B cell (primary cell): ENCODE measurements at regions of chr2 and their contacts with region 1.

Region 1: GRCh38 chr2:38750891-38751595 is at the start of gene SRSF7:
- DNase-seq: peak; percentile 99
- ATAC-seq: peak; percentile 77
- H3K4me3 ChIP-seq: peak within 1 kb of the TSS; percentile 78 to 100 (median 98)
- H3K4me3 Mint-ChIP-seq: peak within 1 kb of the TSS; percentile 99
- H3K27ac ChIP-seq: peak within 1 kb of the TSS; percentile 98 to 99
- H3K27ac Mint-ChIP-seq: peak within 1 kb of the TSS; percentile 99
- H3K4me1 ChIP-seq: peaks cover 39 to 46% of the 10 kb centered on the region in 2 donors
- H3K4me1 Mint-ChIP-seq: peaks cover 54% of the 10 kb centered on the region
- H3K27me3 ChIP-seq: no peaks in the 10 kb centered on the region
- H3K27me3 Mint-ChIP-seq: no peaks in the 10 kb centered on the region
- CTCF ChIP-seq: no peak
- total RNA-seq, gene SRSF7: 280 and 283 TPM in 2 replicates

Region 2: GRCh38 chr2:38535744-38536506 is 215.1 kb before region 1 on chr2:
- CTCF ChIA-PET with region 1: interaction called, 5 read pairs
- POLR2A ChIA-PET with region 1: interaction called, 18 read pairs
- intact Hi-C with region 1: no loop called
- DNase-seq: peak; percentile 85
- ATAC-seq: peak; percentile 54
- H3K4me3 ChIP-seq: peak overlapping the region in 4 of 5 experiments; percentile 40 to 79 (median 52)
- H3K4me3 Mint-ChIP-seq: peak overlapping the region; percentile 78
- H3K27ac ChIP-seq: no peak overlapping the region
- H3K27ac Mint-ChIP-seq: peak overlapping the region; percentile 37
- H3K4me1 ChIP-seq: peaks cover 28 to 39% of the 10 kb centered on the region in 2 donors
- H3K4me1 Mint-ChIP-seq: peaks cover 34% of the 10 kb centered on the region
- H3K27me3 ChIP-seq: peaks cover 0 to 7% (median 1%) of the 10 kb centered on the region in 4 experiments
- H3K27me3 Mint-ChIP-seq: peaks cover 23% of the 10 kb centered on the region
- CTCF ChIP-seq: peak; percentile 90

Region 3: GRCh38 chr2:38665854-38666555 is 85.0 kb before region 1 on chr2 and contains the start of gene GALM:
- CTCF ChIA-PET with region 1: no interaction called
- POLR2A ChIA-PET with region 1: interaction called, 8 read pairs
- intact Hi-C with region 1: loop called (anchors 5 kb)
- DNase-seq: peak; percentile 50
- ATAC-seq: peak; percentile 70
- H3K4me3 ChIP-seq: peak within 1 kb of the TSS; percentile 66 to 90 (median 77)
- H3K4me3 Mint-ChIP-seq: peak within 1 kb of the TSS; percentile 90
- H3K27ac ChIP-seq: peak within 1 kb of the TSS; percentile 46 to 62
- H3K27ac Mint-ChIP-seq: peak within 1 kb of the TSS; percentile 66
- H3K4me1 ChIP-seq: peaks cover 8 to 21% of the 10 kb centered on the region in 2 donors
- H3K4me1 Mint-ChIP-seq: peaks cover 22% of the 10 kb centered on the region
- H3K27me3 ChIP-seq: no peaks in the 10 kb centered on the region
- H3K27me3 Mint-ChIP-seq: no peaks in the 10 kb centered on the region
- CTCF ChIP-seq: no peak
- total RNA-seq, gene GALM: 5.1 and 5.8 TPM in 2 replicates

Region 4: DNA sequence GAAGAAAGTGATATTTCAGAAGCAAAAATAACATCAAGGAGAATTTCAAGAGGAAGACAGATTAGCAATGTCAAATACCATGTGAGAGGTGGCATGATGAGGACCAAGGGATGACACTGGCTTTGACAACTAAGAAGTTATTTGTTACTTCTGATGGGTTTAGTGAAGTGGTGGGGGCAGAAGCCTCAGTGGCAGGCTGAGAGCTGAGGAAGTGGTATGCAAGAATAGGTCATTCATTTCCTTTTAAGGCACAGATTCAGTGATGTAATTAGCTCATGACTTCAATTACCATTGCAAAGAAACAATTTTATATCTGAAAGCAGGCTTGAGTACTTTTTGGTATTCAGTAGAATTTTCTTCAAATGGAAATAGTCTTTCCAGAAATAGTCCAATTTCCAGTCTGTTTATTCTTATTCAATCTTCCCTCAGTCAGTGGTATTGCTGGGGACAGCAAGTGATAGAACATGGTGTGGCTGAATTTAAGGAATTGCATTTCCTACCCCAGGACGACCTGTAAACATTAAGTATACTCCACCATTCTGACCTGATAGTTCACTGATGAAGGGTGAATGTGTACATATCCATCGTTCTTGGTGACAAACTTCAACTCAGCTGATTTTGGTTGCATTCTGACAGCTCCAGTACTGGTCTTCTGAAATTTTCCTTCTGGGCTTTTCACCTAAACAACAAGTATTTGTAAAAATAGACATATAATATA is 55.1 kb after region 1 on chr2:
- CTCF ChIA-PET with region 1: no interaction called
- POLR2A ChIA-PET with region 1: interaction called, 8 read pairs
- intact Hi-C with region 1: loop called (anchors 1 kb)
- DNase-seq: peak; percentile 48
- ATAC-seq: peak; percentile 75
- H3K4me3 ChIP-seq: peak overlapping the region in 1 of 5 experiments; percentile 29
- H3K4me3 Mint-ChIP-seq: no peak overlapping the region
- H3K27ac ChIP-seq: peak overlapping the region; percentile 45 to 73
- H3K27ac Mint-ChIP-seq: no peak overlapping the region
- H3K4me1 ChIP-seq: peaks cover 20 to 24% of the 10 kb centered on the region in 2 donors
- H3K4me1 Mint-ChIP-seq: no peaks in the 10 kb centered on the region
- H3K27me3 ChIP-seq: no peaks in the 10 kb centered on the region
- H3K27me3 Mint-ChIP-seq: no peaks in the 10 kb centered on the region
- CTCF ChIP-seq: no peak

Region 5: GRCh38 chr2:38875576-38876367 is 124.7 kb after region 1 on chr2 and contains the starts of genes DHX57 and MORN2:
- CTCF ChIA-PET with region 1: interaction called, 4 read pairs
- POLR2A ChIA-PET with region 1: interaction called, 10 read pairs
- intact Hi-C with region 1: loop called (anchors 2 kb)
- DNase-seq: peak; percentile 84
- ATAC-seq: peak; percentile 95
- H3K4me3 ChIP-seq: peak within 1 kb of the TSS; percentile 70 to 84 (median 83)
- H3K4me3 Mint-ChIP-seq: peak within 1 kb of the TSS; percentile 97
- H3K27ac ChIP-seq: peak within 1 kb of the TSS; percentile 42 to 63
- H3K27ac Mint-ChIP-seq: peak within 1 kb of the TSS; percentile 88
- H3K4me1 ChIP-seq: peaks cover 12 to 18% of the 10 kb centered on the region in 2 donors
- H3K4me1 Mint-ChIP-seq: peaks cover 25% of the 10 kb centered on the region
- H3K27me3 ChIP-seq: no peaks in the 10 kb centered on the region
- H3K27me3 Mint-ChIP-seq: no peaks in the 10 kb centered on the region
- CTCF ChIP-seq: no peak
- total RNA-seq, gene DHX57: 24.1 and 25.0 TPM in 2 replicates
- total RNA-seq, gene MORN2: 2.3 and 3.9 TPM in 2 replicates

Region 6: GRCh38 chr2:39234754-39235153 is 483.7 kb after region 1 on chr2:
- CTCF ChIA-PET with region 1: no interaction called
- POLR2A ChIA-PET with region 1: no interaction called
- intact Hi-C with region 1: loop called (anchors 5 kb)
- DNase-seq: no peak
- ATAC-seq: no peak
- H3K4me3 ChIP-seq: no peak overlapping the region
- H3K4me3 Mint-ChIP-seq: no peak overlapping the region
- H3K27ac ChIP-seq: no peak overlapping the region
- H3K27ac Mint-ChIP-seq: no peak overlapping the region
- H3K4me1 ChIP-seq: no peaks in the 10 kb centered on the region
- H3K4me1 Mint-ChIP-seq: peaks cover under 1% of the 10 kb centered on the region
- H3K27me3 ChIP-seq: no peaks in the 10 kb centered on the region
- H3K27me3 Mint-ChIP-seq: no peaks in the 10 kb centered on the region
- CTCF ChIP-seq: no peak